Transverse colon (tissue), 4 donors: ENCODE measurements at regions of chrX and their contacts with region 1.

Region 1: DNA sequence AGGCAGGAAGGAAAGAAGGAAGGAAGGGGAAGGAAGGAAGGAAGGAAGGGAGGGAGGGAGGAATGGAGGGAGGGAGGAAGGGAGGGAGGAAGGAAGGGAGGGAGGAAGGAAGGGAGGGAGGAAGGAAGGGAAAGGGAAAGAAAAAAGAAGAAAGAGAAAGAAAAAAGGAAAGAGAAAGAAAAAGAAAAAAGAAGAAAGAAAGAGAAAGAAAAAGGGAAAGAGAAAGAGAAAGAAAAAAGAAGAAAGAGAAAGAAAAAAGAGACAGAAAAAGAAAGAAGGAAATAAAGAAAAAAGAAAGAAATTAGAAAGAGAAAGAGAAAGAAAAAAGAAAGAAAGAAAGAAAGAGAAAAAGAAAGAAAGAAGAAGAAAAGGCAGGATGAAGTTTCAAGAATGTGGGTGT is 15.0 kb upstream of the NHSL2 start:
- DNase-seq: no peak
- H3K4me3 ChIP-seq: no peak overlapping the region
- H3K27ac ChIP-seq: no peak overlapping the region
- H3K4me1 ChIP-seq: no peaks in the 10 kb centered on the region
- H3K27me3 ChIP-seq: no peaks in the 10 kb centered on the region
- CTCF ChIP-seq: no peak
- EP300 ChIP-seq: no peak
- POLR2A ChIP-seq: no peak

Region 2: GRCh38 chrX:71464968-71465367 is 430.6 kb before region 1 on chrX:
- in situ Hi-C with region 1: no loop called
- intact Hi-C with region 1: loop called (anchors 5 kb)
- DNase-seq: no peak
- H3K4me3 ChIP-seq: no peak overlapping the region
- H3K27ac ChIP-seq: no peak overlapping the region
- H3K4me1 ChIP-seq: no peaks in the 10 kb centered on the region
- H3K27me3 ChIP-seq: no peaks in the 10 kb centered on the region
- CTCF ChIP-seq: no peak
- EP300 ChIP-seq: no peak
- POLR2A ChIP-seq: no peak